Naive thymus-derived CD4-positive, alpha-beta T cell (primary cell): ENCODE measurements at regions of chr3 and their contacts with region 1.

Region 1: GRCh38 chr3:186617038-186617946 is 4.4 kb downstream of the AHSG start:
- DNase-seq: peak; percentile 67 to 87 (median 83)
- ATAC-seq: peak; percentile 99
- H3K4me3 ChIP-seq: peak overlapping the region; percentile 23
- H3K4me3 Mint-ChIP-seq: peak overlapping the region; percentile 47 to 81 (median 74)
- H3K27ac ChIP-seq: no peak overlapping the region
- H3K27ac Mint-ChIP-seq: peak overlapping the region in 8 of 9 donors; percentile 51 to 81 (median 62)
- H3K4me1 ChIP-seq: peaks cover 5 to 10% of the 10 kb centered on the region in 2 donors
- H3K4me1 Mint-ChIP-seq: peaks cover 14 to 30% (median 21%) of the 10 kb centered on the region in 7 donors
- H3K27me3 ChIP-seq: no peaks in the 10 kb centered on the region
- H3K27me3 Mint-ChIP-seq: peaks cover 14 to 51% (median 26%) of the 10 kb centered on the region in 5 donors

Region 2: DNA sequence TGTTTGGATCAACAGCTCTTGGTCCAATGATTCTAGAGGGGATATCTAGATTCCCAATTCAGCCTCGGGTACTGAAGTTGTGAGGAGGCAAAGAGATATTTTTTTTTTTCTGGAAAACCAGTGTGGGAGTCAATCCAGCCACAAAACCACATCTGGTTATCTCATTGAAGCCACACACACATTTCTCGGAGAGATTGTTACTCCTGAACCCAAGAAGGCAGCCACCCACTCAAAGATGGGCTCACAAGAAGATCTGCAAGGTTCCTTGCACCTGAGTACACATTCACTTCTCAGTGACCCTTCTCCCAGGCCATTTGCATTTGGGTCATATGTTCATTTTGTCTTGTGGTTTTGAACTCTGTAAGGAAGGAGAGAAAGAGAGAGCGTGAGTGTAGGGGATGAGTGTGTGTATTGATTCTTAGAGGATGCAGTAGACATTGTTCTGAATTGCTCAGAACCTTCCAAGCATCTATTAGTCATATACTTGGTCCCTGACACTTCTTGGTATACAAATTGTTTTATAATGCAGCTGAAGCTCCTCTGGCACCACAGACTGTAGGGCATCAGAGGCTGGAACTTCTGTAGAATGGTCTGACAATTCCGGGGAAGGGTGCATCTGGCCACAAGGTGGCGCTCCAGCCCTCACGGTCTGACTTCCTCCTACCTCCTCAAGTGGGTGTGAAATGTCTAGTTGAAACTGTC is 640.2 kb before region 1 on chr3:
- CTCF ChIA-PET with region 1: interaction called, 13 read pairs
- POLR2A ChIA-PET with region 1: no interaction called
- intact Hi-C with region 1: loop called in 1 of 2 experiments (anchors 1 kb)
- DNase-seq: peak; percentile 47 to 84 (median 70)
- ATAC-seq: peak; percentile 96
- H3K4me3 ChIP-seq: no peak overlapping the region
- H3K4me3 Mint-ChIP-seq: peak overlapping the region in 1 of 10 donors; percentile 5
- H3K27ac ChIP-seq: no peak overlapping the region
- H3K27ac Mint-ChIP-seq: peak overlapping the region in 1 of 9 donors; percentile 21
- H3K4me1 ChIP-seq: no peaks in the 10 kb centered on the region
- H3K4me1 Mint-ChIP-seq: peaks cover 4 to 10% (median 9%) of the 10 kb centered on the region in 7 donors
- H3K27me3 ChIP-seq: no peaks in the 10 kb centered on the region
- H3K27me3 Mint-ChIP-seq: peaks cover 0 to 19% (median 0%) of the 10 kb centered on the region in 5 donors

Region 3: DNA sequence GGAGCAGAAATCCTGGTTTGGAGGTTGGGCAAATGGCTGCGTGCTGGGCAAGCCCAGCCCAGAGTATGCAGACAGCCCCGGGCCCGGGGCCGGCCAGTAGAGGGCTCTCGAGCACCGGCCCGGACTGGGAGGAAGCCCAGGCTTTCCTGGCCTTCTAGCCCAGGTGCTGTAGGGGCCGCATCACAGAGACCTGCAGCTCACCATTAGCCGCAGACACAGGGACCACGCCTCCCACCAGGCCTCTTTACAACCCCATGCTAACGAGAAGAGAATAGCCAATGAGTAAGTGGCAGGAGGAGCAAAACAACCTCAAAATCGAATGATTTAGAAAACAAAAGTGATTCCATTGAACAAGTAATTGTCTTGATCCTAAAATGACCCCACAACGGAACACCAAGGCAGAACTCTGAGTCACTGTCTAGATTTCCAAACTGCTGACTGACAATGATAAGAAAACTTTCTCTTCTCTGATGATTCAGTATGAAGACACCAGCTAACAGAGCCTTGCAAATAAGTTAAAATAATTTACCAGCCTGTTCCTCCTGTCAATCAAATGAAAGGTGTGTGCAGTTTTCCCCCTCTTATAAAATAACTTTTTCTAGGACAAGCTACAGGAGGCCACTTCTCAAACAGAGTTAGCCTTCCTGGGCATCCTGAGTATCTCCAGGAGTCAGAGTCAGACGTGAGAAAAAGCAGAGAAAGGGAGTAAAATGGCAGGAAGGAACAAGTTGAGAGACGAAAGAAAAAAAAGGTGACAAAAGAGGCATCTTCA is 357.5 kb before region 1 on chr3:
- CTCF ChIA-PET with region 1: interaction called, 3 read pairs
- POLR2A ChIA-PET with region 1: interaction called, 4 read pairs
- intact Hi-C with region 1: loop called (anchors 1 to 5 kb)
- DNase-seq: peak; percentile 17 to 65 (median 43)
- ATAC-seq: peak; percentile 92
- H3K4me3 ChIP-seq: no peak overlapping the region
- H3K4me3 Mint-ChIP-seq: peak overlapping the region in 3 of 10 donors; percentile 23 to 41 (median 35)
- H3K27ac ChIP-seq: no peak overlapping the region
- H3K27ac Mint-ChIP-seq: peak overlapping the region in 8 of 9 donors; percentile 12 to 73 (median 32)
- H3K4me1 ChIP-seq: peaks cover 0 to 3% of the 10 kb centered on the region in 2 donors
- H3K4me1 Mint-ChIP-seq: peaks cover 13 to 23% (median 20%) of the 10 kb centered on the region in 7 donors
- H3K27me3 ChIP-seq: no peaks in the 10 kb centered on the region
- H3K27me3 Mint-ChIP-seq: no peaks in the 10 kb centered on the region

Region 4: GRCh38 chr3:186589856-186590579 is 27.3 kb before region 1 on chr3:
- CTCF ChIA-PET with region 1: interaction called, 9 read pairs
- POLR2A ChIA-PET with region 1: no interaction called
- intact Hi-C with region 1: loop called in 1 of 2 experiments (anchors 1 kb)
- DNase-seq: peak in 1 of 9 donors; percentile 18
- ATAC-seq: peak; percentile 71
- H3K4me3 ChIP-seq: no peak overlapping the region
- H3K4me3 Mint-ChIP-seq: no peak overlapping the region
- H3K27ac ChIP-seq: no peak overlapping the region
- H3K27ac Mint-ChIP-seq: peak overlapping the region in 3 of 9 donors; percentile 67 to 80 (median 69)
- H3K4me1 ChIP-seq: no peaks in the 10 kb centered on the region
- H3K4me1 Mint-ChIP-seq: peaks cover 5 to 23% (median 8%) of the 10 kb centered on the region in 7 donors
- H3K27me3 ChIP-seq: no peaks in the 10 kb centered on the region
- H3K27me3 Mint-ChIP-seq: no peaks in the 10 kb centered on the region

Region 5: GRCh38 chr3:186826976-186827731 is 209.9 kb after region 1 on chr3:
- CTCF ChIA-PET with region 1: interaction called, 82 read pairs
- POLR2A ChIA-PET with region 1: interaction called, 3 read pairs
- intact Hi-C with region 1: no loop called
- DNase-seq: peak; percentile 79 to 92 (median 87)
- ATAC-seq: peak; percentile 96
- H3K4me3 ChIP-seq: peak overlapping the region; percentile 66
- H3K4me3 Mint-ChIP-seq: peak overlapping the region; percentile 53 to 91 (median 80)
- H3K27ac ChIP-seq: peak overlapping the region; percentile 52
- H3K27ac Mint-ChIP-seq: peak overlapping the region in 2 of 9 donors; percentile 18 to 19
- H3K4me1 ChIP-seq: peaks cover 6 to 21% of the 10 kb centered on the region in 2 donors
- H3K4me1 Mint-ChIP-seq: peaks cover 15 to 24% (median 20%) of the 10 kb centered on the region in 7 donors
- H3K27me3 ChIP-seq: peaks cover 0 to 22% of the 10 kb centered on the region in 2 donors
- H3K27me3 Mint-ChIP-seq: peaks cover 45 to 61% (median 52%) of the 10 kb centered on the region in 5 donors